Activated CD4-positive, alpha-beta T cell treated with anti-CD3 and anti-CD28 coated beads, Interleukin-2, amount 10 ng/mL, durations not matched to agents 24 days and 14 days (primary cell): ENCODE measurements at regions of chr3 and their contacts with region 1.

Region 1: GRCh38 chr3:191336833-191337232 is 6.5 kb upstream of the UTS2B start:
- DNase-seq: no peak
- H3K4me3 Mint-ChIP-seq: no peak overlapping the region
- H3K27ac Mint-ChIP-seq: peak overlapping the region; percentile 15
- H3K4me1 Mint-ChIP-seq: peaks cover 16% of the 10 kb centered on the region
- H3K27me3 Mint-ChIP-seq: peaks cover 3% of the 10 kb centered on the region

Region 2: DNA sequence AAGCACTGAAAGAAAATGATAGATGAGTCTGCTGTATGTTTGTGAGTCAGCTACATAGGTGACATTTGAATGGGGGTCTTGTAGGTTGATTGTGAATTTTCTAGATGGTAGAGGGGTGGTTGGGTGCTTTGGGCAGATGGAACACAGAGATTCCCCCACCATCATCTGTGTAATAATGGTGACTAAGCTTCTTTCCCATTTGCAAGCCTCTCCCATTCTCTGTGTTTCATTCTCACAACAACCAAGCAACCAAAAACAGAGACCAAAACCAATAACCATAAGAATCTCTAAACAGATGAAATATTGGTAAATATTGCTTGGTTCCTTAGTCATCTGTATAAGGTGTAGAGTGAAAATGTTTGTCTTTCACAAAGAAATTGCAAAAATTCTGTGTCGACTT is 11.3 kb after region 1 on chr3:
- intact Hi-C with region 1: no loop called
- DNase-seq: no peak
- H3K4me3 Mint-ChIP-seq: no peak overlapping the region
- H3K27ac Mint-ChIP-seq: no peak overlapping the region
- H3K4me1 Mint-ChIP-seq: no peaks in the 10 kb centered on the region
- H3K27me3 Mint-ChIP-seq: no peaks in the 10 kb centered on the region

Region 3: GRCh38 chr3:191358929-191359328 is 22.1 kb after region 1 on chr3:
- intact Hi-C with region 1: loop called (anchors 2 kb)
- DNase-seq: no peak
- H3K4me3 Mint-ChIP-seq: no peak overlapping the region
- H3K27ac Mint-ChIP-seq: peak overlapping the region; percentile 54
- H3K4me1 Mint-ChIP-seq: peaks cover 12% of the 10 kb centered on the region
- H3K27me3 Mint-ChIP-seq: no peaks in the 10 kb centered on the region

Region 4: DNA sequence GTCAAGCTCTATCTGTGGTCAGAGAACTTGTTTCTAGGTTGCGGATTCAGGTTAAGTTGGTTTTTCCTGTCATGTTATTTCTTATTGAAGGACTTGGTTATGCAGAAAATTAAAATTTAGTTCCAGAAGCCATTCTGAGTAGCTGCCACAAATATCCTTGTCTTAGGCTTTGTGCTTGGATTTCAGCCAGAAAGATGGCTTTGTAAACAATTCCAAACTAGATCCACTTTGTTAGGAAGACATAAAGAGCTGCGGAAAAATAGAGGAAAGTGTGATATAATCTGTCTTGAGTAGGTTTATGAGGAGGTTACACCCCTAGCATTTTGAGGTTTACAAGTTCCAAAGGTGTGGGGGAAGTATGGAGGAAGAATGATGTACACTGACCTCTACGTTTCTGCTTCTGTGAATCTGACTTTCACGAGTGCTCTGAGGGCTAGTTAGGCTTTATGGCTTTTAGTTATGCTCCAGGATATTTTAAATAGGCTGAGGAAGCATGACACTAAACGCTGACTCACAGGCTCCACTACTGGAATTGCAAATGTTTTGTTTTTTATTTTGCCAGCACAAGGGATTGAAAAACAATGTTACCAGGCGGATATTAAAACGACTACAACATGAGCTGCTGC is 39.8 kb after region 1 on chr3:
- intact Hi-C with region 1: loop called (anchors 5 kb)
- DNase-seq: no peak
- H3K4me3 Mint-ChIP-seq: no peak overlapping the region
- H3K27ac Mint-ChIP-seq: no peak overlapping the region
- H3K4me1 Mint-ChIP-seq: peaks cover 6% of the 10 kb centered on the region
- H3K27me3 Mint-ChIP-seq: no peaks in the 10 kb centered on the region